ENCODE measurements at regions of chr2 and their contacts with region 1.

Region 1: DNA sequence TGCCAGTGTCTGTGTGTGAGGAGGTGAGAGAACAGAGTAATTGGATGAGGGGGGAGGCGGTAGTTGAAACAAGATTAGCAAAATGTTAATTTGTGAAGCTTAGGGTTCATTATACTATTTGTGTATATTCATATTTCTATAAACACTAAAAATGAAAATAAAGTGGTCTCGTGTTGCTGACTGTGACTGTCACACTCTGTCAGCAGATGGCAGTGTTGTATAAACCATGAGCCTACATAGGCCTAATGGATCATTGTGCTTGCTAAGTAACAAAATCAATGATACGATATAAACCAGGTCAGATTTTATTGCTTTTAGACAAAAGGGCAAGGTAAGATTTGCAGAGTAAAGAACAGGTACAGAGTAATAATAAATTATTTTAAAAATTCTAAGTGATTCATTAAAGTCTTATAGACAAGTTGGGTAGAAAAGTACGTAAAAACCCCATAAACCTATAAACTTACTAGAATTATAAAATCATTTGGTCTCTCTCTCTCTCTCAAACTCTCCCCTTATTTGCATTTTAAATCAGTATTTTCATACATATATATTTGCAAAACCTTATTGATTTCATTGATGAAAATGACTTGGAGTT is 182.7 kb downstream of the RPIA start:
- DNase-seq: peak; percentile 30 to 71
- ATAC-seq: peak; percentile 82 to 91
- H3K4me3 ChIP-seq: no peak overlapping the region
- H3K27ac ChIP-seq: no peak overlapping the region
- H3K4me1 ChIP-seq: no peaks in the 10 kb centered on the region
- CTCF ChIP-seq: peak; percentile 91
- EP300 ChIP-seq: no peak
- POLR2A ChIP-seq: no peak
- RAD21 ChIP-seq: peak; percentile 83 to 88

Region 2: GRCh38 chr2:88729061-88729745 is 145.0 kb before region 1 on chr2:
- CTCF ChIA-PET with region 1: no interaction called
- POLR2A ChIA-PET with region 1: no interaction called
- DNase-seq: no peak
- ATAC-seq: no peak
- H3K4me3 ChIP-seq: no peak overlapping the region
- H3K27ac ChIP-seq: no peak overlapping the region
- H3K4me1 ChIP-seq: no peaks in the 10 kb centered on the region
- CTCF ChIP-seq: no peak
- EP300 ChIP-seq: no peak
- POLR2A ChIP-seq: no peak
- RAD21 ChIP-seq: no peak

Region 3: GRCh38 chr2:88859461-88859860 is 14.7 kb before region 1 on chr2:
- CTCF ChIA-PET with region 1: interaction called, 29 read pairs
- POLR2A ChIA-PET with region 1: no interaction called
- DNase-seq: no peak
- ATAC-seq: no peak
- H3K4me3 ChIP-seq: no peak overlapping the region
- H3K27ac ChIP-seq: no peak overlapping the region
- H3K4me1 ChIP-seq: no peaks in the 10 kb centered on the region
- CTCF ChIP-seq: no peak
- EP300 ChIP-seq: no peak
- POLR2A ChIP-seq: no peak
- RAD21 ChIP-seq: no peak

Region 4: DNA sequence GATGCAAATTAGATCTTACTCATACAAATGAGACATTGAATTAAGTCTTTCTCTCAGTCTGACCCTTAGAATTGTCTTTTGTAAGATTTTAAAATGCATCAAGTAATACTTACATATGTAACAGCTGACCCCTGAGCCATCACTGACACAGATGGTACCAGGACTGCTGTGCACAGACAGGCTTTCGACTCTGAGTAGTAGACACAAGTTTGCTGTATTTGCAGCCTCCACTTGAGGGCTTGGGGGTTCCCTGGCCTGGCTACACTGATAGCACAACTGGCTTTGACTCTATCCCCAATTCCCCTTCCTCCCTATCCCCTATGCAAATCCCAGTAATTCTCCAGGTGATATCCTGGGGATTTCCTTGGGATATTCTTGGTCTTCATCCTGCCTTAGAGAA is 18.0 kb after region 1 on chr2:
- CTCF ChIA-PET with region 1: interaction called, 12 read pairs
- POLR2A ChIA-PET with region 1: no interaction called
- DNase-seq: no peak
- ATAC-seq: no peak
- H3K4me3 ChIP-seq: no peak overlapping the region
- H3K27ac ChIP-seq: no peak overlapping the region
- H3K4me1 ChIP-seq: no peaks in the 10 kb centered on the region
- CTCF ChIP-seq: no peak
- EP300 ChIP-seq: no peak
- POLR2A ChIP-seq: no peak
- RAD21 ChIP-seq: no peak

Region 5: DNA sequence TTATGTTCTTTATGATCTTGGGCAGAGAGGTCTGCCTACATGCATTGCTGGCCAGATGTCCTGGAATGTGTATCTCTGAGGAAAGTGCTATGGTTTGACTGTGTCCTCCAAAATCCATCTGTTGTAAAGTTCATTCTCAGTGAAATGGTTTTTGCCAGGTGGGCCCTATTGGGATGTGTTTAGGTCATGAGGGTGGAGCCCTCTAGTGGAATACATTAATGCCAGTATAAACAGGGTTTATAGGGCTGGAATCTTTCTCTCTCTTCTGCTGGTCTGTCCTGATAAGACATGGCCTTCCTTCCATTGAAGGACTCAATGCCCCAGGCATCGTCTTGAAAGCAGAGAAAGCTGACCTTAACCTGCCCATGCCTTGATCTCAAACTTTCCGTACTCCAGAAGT is 75.8 kb after region 1 on chr2:
- CTCF ChIA-PET with region 1: no interaction called
- POLR2A ChIA-PET with region 1: no interaction called
- DNase-seq: peak; percentile 10 to 29
- ATAC-seq: peak; percentile 76 to 77; a peak in 5 of 6 replicates
- H3K4me3 ChIP-seq: no peak overlapping the region
- H3K27ac ChIP-seq: no peak overlapping the region
- H3K4me1 ChIP-seq: no peaks in the 10 kb centered on the region
- CTCF ChIP-seq: peak; percentile 38; the same call in 2 of the 3 replicates
- EP300 ChIP-seq: no peak
- POLR2A ChIP-seq: no peak
- RAD21 ChIP-seq: peak in 1 of 2 experiments; percentile 23; a peak in 1 of 5 replicates

Measured in A549 (cell line).